Motor neuron (in vitro differentiated cells): ENCODE measurements at regions of chr17 and their contacts with region 1.

Region 1: DNA sequence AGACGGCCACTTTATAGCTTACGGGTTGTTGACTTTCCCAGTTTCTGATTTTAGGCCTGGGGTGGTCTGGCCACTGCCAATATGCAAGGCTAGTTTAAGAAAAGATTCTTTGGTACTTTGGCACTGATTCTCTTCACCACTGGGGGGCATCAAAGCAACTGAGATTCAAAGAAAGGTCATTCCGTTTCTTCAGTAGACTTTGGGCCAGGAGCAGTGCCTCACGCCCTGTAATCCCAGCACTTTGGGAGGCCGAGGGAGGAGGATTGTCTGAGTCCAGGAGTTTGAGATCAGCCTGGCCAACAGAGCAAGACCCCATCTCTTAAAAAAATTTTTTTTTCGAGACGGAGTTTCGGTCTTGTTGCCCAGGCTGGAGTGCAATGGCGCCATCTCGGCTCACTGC is 53.0 kb downstream of the RPA1 start:
- ATAC-seq: peak in 3 of 8 experiments; percentile 54 to 65 (median 55)
- H3K4me3 ChIP-seq: no peak overlapping the region
- H3K27ac ChIP-seq: no peak overlapping the region
- H3K4me1 ChIP-seq: no peaks in the 10 kb centered on the region

Region 2: DNA sequence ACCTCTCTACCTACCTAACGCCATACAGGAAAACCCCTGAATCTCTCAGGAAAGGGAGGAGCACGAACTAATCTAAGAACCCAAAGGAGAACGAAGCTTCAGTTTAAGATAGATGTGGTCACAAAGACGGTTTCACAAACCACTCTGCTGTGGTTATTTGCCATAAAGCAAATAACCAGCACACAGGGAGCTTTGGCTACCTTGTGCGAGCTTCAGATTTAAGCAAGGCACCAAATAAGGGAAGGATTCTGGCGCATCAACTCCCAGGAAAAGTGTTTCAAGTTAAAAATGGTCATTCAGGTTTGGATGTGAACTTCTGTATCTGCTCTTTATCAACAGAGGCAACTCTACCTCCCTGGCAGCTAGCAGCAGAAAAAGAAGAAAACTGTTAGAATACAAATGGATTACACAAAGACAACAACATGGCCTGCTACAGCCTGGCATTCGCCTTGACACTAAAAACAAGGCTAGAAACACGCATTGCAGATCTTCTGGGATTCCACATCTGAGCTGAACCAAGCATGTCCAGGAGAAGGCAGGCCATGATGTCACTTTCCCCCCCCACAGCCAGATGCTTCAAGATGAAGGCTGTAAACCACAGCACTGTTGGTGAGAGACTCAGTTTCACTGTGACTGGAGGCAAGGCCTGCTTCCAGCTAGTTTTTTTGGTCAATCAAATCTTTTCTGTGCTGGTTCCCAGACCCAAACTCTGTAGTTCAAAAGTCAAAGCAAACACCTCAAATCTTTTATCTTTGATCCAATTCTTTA is 377.1 kb after region 1 on chr17:
- in situ Hi-C with region 1: loop called in 1 of 9 experiments (anchors 25 kb)
- ATAC-seq: peak in 2 of 8 experiments; percentile 24 to 35
- H3K4me3 ChIP-seq: no peak overlapping the region
- H3K27ac ChIP-seq: no peak overlapping the region
- H3K4me1 ChIP-seq: no peaks in the 10 kb centered on the region